ENCODE measurements at regions of chr3 and their contacts with region 1.

Region 1: GRCh38 chr3:183385698-183386613 is 42.5 kb downstream of the MCF2L2 start:
- DNase-seq: peak in 1 of 2 donors; percentile 71
- H3K4me3 ChIP-seq: peak overlapping the region in 1 of 2 donors; percentile 24
- H3K27ac ChIP-seq: peak overlapping the region; percentile 54 to 62
- H3K4me1 ChIP-seq: peaks cover 0 to 7% of the 10 kb centered on the region in 2 donors
- H3K27me3 ChIP-seq: no peaks in the 10 kb centered on the region
- CTCF ChIP-seq: peak; percentile 60 to 79 (median 72)

Region 2: DNA sequence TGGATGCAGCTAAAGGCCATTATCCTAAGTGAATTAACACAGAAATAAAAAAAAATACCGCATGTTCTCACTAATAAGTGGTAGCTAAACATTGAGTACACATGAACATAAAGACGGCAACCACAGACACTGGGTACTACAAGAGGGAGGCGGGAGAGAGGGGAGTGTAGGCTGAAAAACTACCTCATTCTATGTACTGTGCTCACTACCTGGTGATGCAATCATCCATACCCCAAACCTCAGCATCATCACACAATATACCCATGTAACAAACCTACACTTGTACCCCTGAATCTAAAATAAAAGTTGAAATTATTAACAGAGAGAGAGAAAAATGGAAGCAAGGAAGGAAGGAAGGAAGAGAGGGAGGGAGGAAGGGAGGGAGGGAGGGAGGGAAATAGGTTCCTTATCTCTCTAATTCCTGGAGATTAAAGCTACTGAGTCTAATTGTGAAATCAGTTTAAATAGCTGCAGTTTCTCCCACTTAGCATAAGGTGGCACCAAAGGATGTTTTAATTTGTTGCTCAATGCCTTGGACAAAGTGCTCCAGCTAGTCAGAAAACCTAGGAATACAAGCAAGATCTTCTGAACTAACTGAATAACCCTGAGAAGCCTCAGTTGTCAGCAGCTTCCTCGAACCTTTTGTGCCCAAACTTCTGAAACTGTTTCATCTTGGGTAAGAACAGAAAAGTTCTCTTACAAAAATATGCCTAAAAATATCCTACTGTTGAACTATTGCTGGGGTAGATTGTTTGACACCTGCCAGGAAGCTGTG is 672.0 kb before region 1 on chr3:
- intact Hi-C with region 1: loop called (anchors 10 kb)
- DNase-seq: no peak
- H3K4me3 ChIP-seq: no peak overlapping the region
- H3K27ac ChIP-seq: no peak overlapping the region
- H3K4me1 ChIP-seq: no peaks in the 10 kb centered on the region
- H3K27me3 ChIP-seq: no peaks in the 10 kb centered on the region
- CTCF ChIP-seq: peak; percentile 33 to 60 (median 44)

Region 3: DNA sequence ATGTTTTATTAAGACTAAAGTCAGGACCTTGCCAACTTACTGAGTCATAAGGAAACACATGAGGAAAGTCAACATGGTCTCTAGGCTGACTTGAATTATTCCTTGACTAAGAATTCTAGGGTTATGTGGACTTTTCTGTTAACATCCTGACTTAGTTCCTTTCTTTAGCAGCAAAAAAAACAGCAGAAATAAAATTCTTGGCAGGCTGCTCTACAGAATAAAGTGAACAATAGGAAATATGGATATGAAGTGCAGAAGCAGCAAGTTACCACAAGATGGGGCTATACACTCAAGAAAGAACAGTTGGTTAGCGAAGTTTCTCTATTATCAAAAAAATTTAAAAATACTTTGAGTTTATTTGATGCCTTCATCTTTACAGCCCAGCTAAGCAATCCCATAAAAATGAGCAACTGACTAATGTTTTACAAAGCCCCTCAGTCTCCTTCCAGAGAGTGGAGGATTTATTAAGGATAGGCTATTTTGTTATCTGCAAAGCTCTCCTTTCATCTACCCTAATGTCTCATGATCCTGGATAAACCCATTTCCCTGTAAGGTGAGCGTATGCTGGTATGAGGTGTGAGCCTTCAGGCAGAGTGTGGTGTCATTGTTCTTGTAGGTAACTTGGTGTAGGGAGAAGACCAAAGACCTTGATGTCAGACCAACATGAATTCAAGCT is 263.6 kb before region 1 on chr3:
- intact Hi-C with region 1: loop called (anchors 1 kb)
- DNase-seq: no peak
- H3K4me3 ChIP-seq: no peak overlapping the region
- H3K27ac ChIP-seq: peak overlapping the region; percentile 55 to 61
- H3K4me1 ChIP-seq: peaks cover 0 to 7% of the 10 kb centered on the region in 2 donors
- H3K27me3 ChIP-seq: no peaks in the 10 kb centered on the region
- CTCF ChIP-seq: peak; percentile 74 to 81 (median 80)

Region 4: GRCh38 chr3:183178629-183179549 is 207.1 kb before region 1 on chr3:
- intact Hi-C with region 1: loop called (anchors 1 kb)
- DNase-seq: peak in 1 of 2 donors; percentile 70
- H3K4me3 ChIP-seq: peak overlapping the region; percentile 65 to 77
- H3K27ac ChIP-seq: no peak overlapping the region
- H3K4me1 ChIP-seq: peaks cover 2 to 11% of the 10 kb centered on the region in 2 donors
- H3K27me3 ChIP-seq: peaks cover 3% of the 10 kb centered on the region
- CTCF ChIP-seq: peak in 2 of 3 experiments; percentile 24 to 39

Region 5: GRCh38 chr3:183252973-183253901 is 132.7 kb before region 1 on chr3 and contains the start of gene B3GNT5:
- intact Hi-C with region 1: loop called (anchors 5 kb)
- DNase-seq: peak in 1 of 2 donors; percentile 84
- H3K4me3 ChIP-seq: peak within 1 kb of the TSS; percentile 78 to 96
- H3K27ac ChIP-seq: peak within 1 kb of the TSS; percentile 65 to 77
- H3K4me1 ChIP-seq: peaks cover 0 to 2% of the 10 kb centered on the region in 2 donors
- H3K27me3 ChIP-seq: no peaks in the 10 kb centered on the region
- CTCF ChIP-seq: no peak
- total RNA-seq, gene B3GNT5: 0.11 TPM

Measured in ascending aorta (tissue), 2 donors.